GM12878 (cell line): ENCODE measurements at regions of chr2 and their contacts with region 1.

Region 1: GRCh38 chr2:191611614-191612013 is 66.3 kb upstream of the NABP1 start:
- DNase-seq: no peak
- ATAC-seq: peak; percentile 99
- H3K4me3 ChIP-seq: no peak overlapping the region
- H3K27ac ChIP-seq: no peak overlapping the region
- H3K4me1 ChIP-seq: peaks cover 10% of the 10 kb centered on the region
- H3K27me3 ChIP-seq: no peaks in the 10 kb centered on the region
- CTCF ChIP-seq: no peak
- EP300 ChIP-seq: peak; percentile 50 to 90; a peak in 3 of 4 replicates
- POLR2A ChIP-seq: no peak
- RAD21 ChIP-seq: no peak

Region 2: DNA sequence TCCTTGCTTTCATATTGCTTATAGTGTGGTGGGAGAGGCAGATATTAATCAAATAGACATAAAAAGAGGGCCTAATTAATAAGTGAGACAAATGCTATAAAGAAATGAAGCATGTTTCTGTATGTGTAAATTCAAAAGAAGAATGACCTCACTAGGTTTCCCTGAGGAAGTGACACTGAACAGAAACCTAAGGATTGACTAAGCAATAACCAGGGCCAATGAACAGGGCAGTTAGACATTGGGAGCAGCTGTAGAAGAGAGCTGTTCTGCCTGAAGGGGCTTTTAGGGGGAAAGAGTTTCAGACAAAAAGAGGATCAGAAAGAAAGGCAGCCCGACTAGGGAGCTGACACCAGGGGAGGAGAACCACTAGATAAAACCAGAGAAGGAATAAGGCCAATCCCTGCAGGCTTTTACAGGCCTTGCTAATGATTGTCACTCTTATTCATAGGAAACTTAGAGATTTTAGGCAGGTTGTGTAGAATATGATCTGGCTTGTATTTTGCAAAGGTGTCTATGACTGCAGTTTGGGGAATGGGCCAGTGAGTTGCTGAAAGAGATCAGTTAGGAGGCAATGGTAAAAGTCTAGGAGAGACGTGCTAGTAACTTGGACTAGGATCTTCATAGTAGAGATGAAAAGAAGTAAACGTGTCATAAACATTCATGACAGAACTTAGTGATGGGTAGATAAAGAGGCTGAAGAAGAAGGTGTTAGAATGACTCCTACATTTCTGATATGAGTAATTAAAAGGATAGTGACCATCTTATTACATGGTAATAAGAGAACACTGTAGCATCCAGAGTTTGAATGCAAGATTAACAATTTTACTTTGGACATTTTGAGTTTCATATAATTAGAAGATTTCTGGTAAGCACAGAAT is 39.5 kb after region 1 on chr2:
- CTCF ChIA-PET with region 1: no interaction called
- POLR2A ChIA-PET with region 1: no interaction called
- RAD21 ChIA-PET with region 1: no interaction called
- SMC1A ChIA-PET with region 1: interaction called, 12 read pairs
- in situ Hi-C with region 1: no loop called
- intact Hi-C with region 1: loop called (anchors 2 kb)
- DNase-seq: peak; percentile 73
- ATAC-seq: peak; percentile 98
- H3K4me3 ChIP-seq: no peak overlapping the region
- H3K27ac ChIP-seq: peak overlapping the region; percentile 38; the same call in 1 of the 2 replicates
- H3K4me1 ChIP-seq: 0 out of 2 replicates have a peak, but pooled peaks cover 6% of the 10 kb centered on the region
- H3K27me3 ChIP-seq: no peaks in the 10 kb centered on the region
- CTCF ChIP-seq: no peak
- EP300 ChIP-seq: peak; percentile 66 to 90; a peak in 2 of 4 replicates
- POLR2A ChIP-seq: no peak
- RAD21 ChIP-seq: peak; percentile 25; the same call in 1 of the 2 replicates